ENCODE measurements at regions of chr11 and their contacts with region 1.

Region 1: DNA sequence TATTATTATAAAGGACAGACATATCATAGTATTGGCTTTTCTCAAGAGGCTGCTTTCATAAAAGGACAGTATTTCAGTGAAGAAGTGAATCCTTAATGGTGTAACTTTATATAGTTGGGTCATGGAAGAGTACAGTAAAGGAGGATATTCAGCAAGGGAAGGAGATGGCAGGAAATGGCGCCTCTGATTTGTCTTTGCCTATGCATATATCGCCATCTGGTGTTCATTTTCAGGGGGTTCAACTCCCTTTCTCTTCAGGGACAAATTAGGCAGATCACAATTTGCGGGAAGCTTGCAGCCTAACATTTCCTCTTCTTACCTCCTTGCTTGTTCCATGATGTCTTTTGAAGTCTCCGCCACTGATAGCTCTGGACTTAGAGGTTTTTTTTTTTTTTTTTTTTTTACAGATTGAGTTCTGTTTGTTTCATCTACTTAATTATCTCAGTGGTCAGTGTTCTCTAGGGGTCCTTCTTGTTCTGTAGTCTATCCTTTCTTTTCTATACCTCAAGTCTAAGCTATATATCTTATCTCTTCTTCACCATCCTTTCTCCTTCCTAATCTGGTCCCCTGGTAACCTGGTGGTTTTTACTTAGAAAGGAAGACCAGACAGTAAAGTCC is 21.8 kb upstream of the RRM1 start:
- DNase-seq: peak; percentile 62
- CTCF ChIP-seq: peak; percentile 75

Region 2: GRCh38 chr11:3807909-3808860 is 264.6 kb before region 1 on chr11 and contains the start of gene PGAP2:
- CTCF ChIA-PET with region 1: interaction called, 13 read pairs
- POLR2A ChIA-PET with region 1: no interaction called
- DNase-seq: peak; percentile 80
- CTCF ChIP-seq: peak; percentile 72

Region 3: GRCh38 chr11:3824714-3825472 is 247.9 kb before region 1 on chr11:
- CTCF ChIA-PET with region 1: interaction called, 1,411 read pairs
- POLR2A ChIA-PET with region 1: no interaction called
- DNase-seq: peak; percentile 83
- CTCF ChIP-seq: peak; percentile 71

Region 4: DNA sequence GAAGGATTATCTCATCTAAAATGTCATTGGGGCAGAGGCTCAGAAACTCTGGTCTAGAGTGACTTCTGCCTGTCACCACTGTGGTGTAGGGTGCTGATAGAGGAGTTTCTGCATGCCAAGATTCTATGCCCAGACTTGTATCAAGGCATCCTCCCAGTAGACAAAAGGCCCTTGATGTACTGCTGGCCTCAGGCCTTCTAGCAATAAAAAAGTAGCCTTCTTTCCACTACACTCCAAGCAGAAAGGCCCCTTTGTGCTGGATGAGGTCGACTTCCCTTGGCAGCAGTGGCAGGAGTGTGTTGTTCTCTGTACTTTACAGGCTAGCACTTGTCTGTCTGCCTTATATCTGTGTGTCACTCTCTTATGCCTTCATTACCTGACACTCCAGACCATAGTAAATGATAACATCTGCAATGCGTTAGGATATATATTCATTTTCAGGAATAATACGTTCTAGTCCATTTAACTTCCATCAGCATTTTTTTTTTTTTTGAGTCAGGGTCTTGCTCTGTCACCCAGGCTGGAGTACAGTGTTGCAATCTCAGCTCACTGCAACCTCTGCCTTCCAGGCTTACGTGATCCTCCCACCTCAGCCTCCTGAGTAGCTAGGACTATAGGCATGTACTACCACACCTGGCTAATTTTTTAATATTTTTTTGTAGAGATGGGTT is 27.7 kb before region 1 on chr11:
- CTCF ChIA-PET with region 1: interaction called, 17 read pairs
- POLR2A ChIA-PET with region 1: no interaction called
- DNase-seq: no peak
- CTCF ChIP-seq: no peak

Region 5: GRCh38 chr11:4094348-4095291 is 21.8 kb after region 1 on chr11 and contains the start of gene RRM1:
- CTCF ChIA-PET with region 1: interaction called, 126 read pairs
- POLR2A ChIA-PET with region 1: no interaction called
- DNase-seq: peak; percentile 94
- CTCF ChIP-seq: no peak

Region 6: GRCh38 chr11:4178813-4179662 is 106.3 kb after region 1 on chr11:
- CTCF ChIA-PET with region 1: no interaction called
- POLR2A ChIA-PET with region 1: no interaction called
- DNase-seq: no peak
- CTCF ChIP-seq: no peak

Measured in GM10248 (cell line).